ENCODE measurements at regions of chr5 and their contacts with region 1.

Region 1: DNA sequence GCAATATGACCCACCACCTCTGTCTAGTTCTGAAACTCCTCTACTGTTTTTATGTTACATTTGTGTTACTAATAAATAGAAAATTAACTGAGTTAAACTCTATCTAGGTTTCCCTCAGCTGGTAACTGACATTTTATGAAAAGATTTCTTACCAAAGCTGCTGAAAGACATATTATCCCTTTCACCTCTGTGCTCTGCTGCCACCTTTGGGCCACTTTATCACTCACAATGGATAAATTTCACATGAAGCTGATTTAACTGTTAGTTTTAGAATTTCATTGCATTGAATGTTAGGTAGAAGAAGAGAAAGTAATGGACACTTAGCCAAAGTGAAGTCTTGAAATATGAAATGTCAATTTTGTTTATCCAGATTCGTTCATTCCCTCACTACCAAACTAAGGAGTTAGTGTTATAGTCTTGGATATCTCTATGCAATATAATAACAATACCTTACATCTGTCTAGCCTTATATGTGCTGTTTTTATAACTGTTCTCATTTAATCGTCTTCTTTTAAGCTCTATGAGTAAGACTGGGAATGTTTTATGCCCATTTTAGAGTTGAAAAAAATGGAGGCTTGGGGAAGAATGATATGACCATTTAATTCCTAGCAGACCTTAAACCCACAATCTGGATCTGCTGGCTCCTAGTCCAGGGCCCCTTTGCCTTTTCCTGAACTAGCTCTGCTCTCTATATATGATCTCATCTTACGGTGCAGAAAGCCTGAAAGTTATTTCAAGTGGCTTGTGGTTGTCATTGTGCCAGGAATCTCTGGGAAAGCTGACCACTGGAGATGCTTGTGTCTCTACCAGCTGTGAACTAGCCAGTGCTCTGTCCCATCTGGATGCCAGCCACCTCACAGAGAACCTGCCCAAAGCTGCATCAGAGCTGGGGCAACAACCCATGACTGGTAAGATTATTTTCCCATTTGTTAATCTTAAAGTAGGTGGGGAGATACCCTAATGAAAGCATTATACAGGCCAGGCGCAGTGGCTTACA is 97.1 kb downstream of the GOLPH3 start:
- DNase-seq: peak in 1 of 2 donors; percentile 67
- ATAC-seq: peak in 1 of 3 donors; percentile 56
- H3K4me3 ChIP-seq: no peak overlapping the region
- H3K4me3 Mint-ChIP-seq: no peak overlapping the region
- H3K27ac ChIP-seq: no peak overlapping the region
- H3K27ac Mint-ChIP-seq: no peak overlapping the region
- H3K4me1 ChIP-seq: no peaks in the 10 kb centered on the region
- H3K4me1 Mint-ChIP-seq: no peaks in the 10 kb centered on the region
- H3K27me3 ChIP-seq: no peaks in the 10 kb centered on the region
- H3K27me3 Mint-ChIP-seq: no peaks in the 10 kb centered on the region
- CTCF ChIP-seq: peak; percentile 60

Region 2: DNA sequence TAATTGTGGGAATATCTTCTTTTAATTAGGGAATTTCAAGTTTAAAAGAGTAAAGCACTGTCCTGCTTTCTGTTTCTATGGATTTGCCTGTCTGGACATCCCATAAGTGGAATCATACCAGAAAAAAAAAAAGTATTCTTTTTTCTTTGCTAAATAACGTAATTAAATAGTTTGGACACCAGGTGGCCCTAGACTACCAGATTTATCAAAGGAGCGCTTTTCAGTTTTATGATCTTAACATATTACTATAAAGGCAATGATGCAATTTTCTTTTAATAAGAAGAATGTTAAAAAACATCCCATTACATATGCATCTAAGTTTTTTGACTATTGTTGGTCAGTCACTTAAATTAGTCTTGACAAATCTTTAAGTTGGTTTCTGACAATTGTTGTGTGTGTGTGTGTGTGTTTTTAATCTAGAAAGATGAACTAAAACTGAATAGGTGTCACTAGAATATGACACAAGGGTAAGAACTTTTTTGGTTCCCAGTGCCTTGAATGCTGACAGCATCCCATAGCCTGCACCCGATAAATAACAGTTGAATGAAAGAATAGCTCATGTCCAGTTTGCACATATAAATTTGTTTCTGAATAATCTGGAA is 495.4 kb before region 1 on chr5:
- intact Hi-C with region 1: loop called (anchors 2 kb)
- DNase-seq: peak in 1 of 2 donors; percentile 61
- ATAC-seq: peak in 1 of 3 donors; percentile 53
- H3K4me3 ChIP-seq: no peak overlapping the region
- H3K4me3 Mint-ChIP-seq: no peak overlapping the region
- H3K27ac ChIP-seq: no peak overlapping the region
- H3K27ac Mint-ChIP-seq: no peak overlapping the region
- H3K4me1 ChIP-seq: no peaks in the 10 kb centered on the region
- H3K4me1 Mint-ChIP-seq: no peaks in the 10 kb centered on the region
- H3K27me3 ChIP-seq: no peaks in the 10 kb centered on the region
- H3K27me3 Mint-ChIP-seq: peaks cover 13 to 16% of the 10 kb centered on the region in 2 donors
- CTCF ChIP-seq: peak; percentile 73

Region 3: DNA sequence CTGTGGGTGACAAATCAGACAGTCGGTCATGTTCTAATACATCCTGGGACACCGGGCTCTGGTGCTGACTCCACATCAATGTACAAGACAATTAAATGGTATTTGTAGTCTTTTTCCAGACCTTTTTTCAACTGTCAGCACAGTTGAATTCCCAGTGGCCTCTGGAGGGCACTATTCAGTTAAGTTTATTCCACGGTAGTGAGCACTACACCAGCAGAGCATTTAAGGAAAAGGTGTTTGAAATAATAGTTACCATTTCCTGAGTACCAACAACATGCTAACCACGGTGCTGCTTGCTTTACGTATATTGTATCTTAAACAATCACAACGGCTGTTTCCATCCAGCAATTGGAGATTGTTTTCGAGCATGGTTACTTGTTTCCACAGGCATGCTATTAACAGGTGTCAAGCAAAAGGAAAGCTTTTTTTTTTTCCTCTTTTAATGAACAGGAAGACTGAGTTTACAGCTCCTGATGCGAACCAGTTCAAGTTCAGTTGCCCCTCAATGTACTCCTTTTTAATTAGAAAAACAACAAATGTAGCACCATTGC is 251.4 kb before region 1 on chr5:
- intact Hi-C with region 1: loop called (anchors 1 kb)
- DNase-seq: peak in 1 of 2 donors; percentile 69
- ATAC-seq: peak; percentile 66 to 94 (median 74)
- H3K4me3 ChIP-seq: no peak overlapping the region
- H3K4me3 Mint-ChIP-seq: no peak overlapping the region
- H3K27ac ChIP-seq: no peak overlapping the region
- H3K27ac Mint-ChIP-seq: no peak overlapping the region
- H3K4me1 ChIP-seq: no peaks in the 10 kb centered on the region
- H3K4me1 Mint-ChIP-seq: peaks cover 0 to 7% of the 10 kb centered on the region in 2 donors
- H3K27me3 ChIP-seq: no peaks in the 10 kb centered on the region
- H3K27me3 Mint-ChIP-seq: peaks cover 19 to 21% of the 10 kb centered on the region in 2 donors
- CTCF ChIP-seq: peak; percentile 41

Region 4: GRCh38 chr5:32147236-32147635 is 70.2 kb after region 1 on chr5:
- intact Hi-C with region 1: no loop called
- DNase-seq: no peak
- ATAC-seq: no peak
- H3K4me3 ChIP-seq: no peak overlapping the region
- H3K4me3 Mint-ChIP-seq: no peak overlapping the region
- H3K27ac ChIP-seq: no peak overlapping the region
- H3K27ac Mint-ChIP-seq: peak overlapping the region; percentile 41 to 65
- H3K4me1 ChIP-seq: peaks cover 12% of the 10 kb centered on the region
- H3K4me1 Mint-ChIP-seq: peaks cover 56% of the 10 kb centered on the region in 2 donors
- H3K27me3 ChIP-seq: no peaks in the 10 kb centered on the region
- H3K27me3 Mint-ChIP-seq: no peaks in the 10 kb centered on the region
- CTCF ChIP-seq: no peak

Measured in natural killer cell (primary cell).